A673 (cell line): ENCODE measurements at regions of chr6 and their contacts with region 1.

Region 1: GRCh38 chr6:89977808-89978748 is 83.8 kb downstream of the GJA10 start:
- DNase-seq: peak; percentile 92
- H3K4me3 ChIP-seq: peak overlapping the region; percentile 11
- H3K27ac ChIP-seq: peak overlapping the region; percentile 5
- H3K4me1 ChIP-seq: peaks cover 27% of the 10 kb centered on the region
- H3K27me3 ChIP-seq: peaks cover 30% of the 10 kb centered on the region
- CTCF ChIP-seq: no peak

Region 2: DNA sequence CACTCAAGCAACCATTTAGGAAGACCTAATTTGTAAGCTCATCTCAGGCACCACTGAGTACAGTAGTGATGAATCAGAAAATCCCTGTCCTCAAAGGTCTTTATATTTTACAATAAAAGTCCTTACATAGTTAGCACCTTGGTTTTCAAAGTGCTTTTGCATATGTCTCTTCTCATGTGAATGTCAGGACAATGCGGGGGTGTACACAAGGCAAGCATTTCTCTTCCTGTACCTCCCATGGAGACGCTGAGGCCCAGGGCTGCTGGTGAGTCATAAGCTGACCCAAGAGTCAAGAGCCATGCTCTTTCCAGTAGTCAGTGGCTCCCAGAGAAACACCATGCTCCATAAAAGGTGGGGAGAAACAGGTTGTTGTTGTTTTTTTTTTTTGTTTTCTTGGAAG is 90.2 kb after region 1 on chr6:
- CTCF ChIA-PET with region 1: no interaction called
- POLR2A ChIA-PET with region 1: no interaction called
- intact Hi-C with region 1: no loop called
- DNase-seq: peak; percentile 51
- H3K4me3 ChIP-seq: no peak overlapping the region
- H3K27ac ChIP-seq: no peak overlapping the region
- H3K4me1 ChIP-seq: no peaks in the 10 kb centered on the region
- H3K27me3 ChIP-seq: peaks cover 20% of the 10 kb centered on the region
- CTCF ChIP-seq: no peak

Region 3: DNA sequence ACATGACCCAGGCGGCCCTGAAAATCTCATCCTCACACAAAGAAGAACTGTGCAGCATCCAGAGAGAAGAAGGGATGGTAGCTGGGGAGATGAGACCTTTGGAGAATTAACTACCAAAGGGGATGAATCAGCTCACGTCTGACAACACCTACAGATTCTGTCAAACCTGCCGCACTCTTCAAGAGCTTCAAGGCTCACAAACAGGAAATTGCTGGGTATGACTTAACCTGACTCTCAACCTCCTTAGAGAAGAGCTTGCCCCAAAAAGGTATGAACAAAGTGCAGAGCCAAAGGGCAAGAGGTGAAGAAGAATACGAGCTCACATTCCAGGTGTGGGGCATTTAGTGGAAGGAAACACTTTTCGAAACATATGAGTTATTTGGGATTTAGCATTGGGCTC is 178.8 kb after region 1 on chr6:
- CTCF ChIA-PET with region 1: no interaction called
- POLR2A ChIA-PET with region 1: no interaction called
- intact Hi-C with region 1: loop called (anchors 5 kb)
- DNase-seq: no peak
- H3K4me3 ChIP-seq: no peak overlapping the region
- H3K27ac ChIP-seq: no peak overlapping the region
- H3K4me1 ChIP-seq: peaks cover 25% of the 10 kb centered on the region
- H3K27me3 ChIP-seq: peaks cover 11% of the 10 kb centered on the region
- CTCF ChIP-seq: no peak

Region 4: GRCh38 chr6:90179190-90180169 is 201.4 kb after region 1 on chr6:
- CTCF ChIA-PET with region 1: no interaction called
- POLR2A ChIA-PET with region 1: no interaction called
- intact Hi-C with region 1: loop called (anchors 5 kb)
- DNase-seq: peak; percentile 40
- H3K4me3 ChIP-seq: no peak overlapping the region
- H3K27ac ChIP-seq: no peak overlapping the region
- H3K4me1 ChIP-seq: no peaks in the 10 kb centered on the region
- H3K27me3 ChIP-seq: no peaks in the 10 kb centered on the region
- CTCF ChIP-seq: peak; percentile 61